ENCODE measurements at regions of chr10 and their contacts with region 1.

Region 1: GRCh38 chr10:122565728-122566206 is 5.2 kb downstream of the DMBT1 start:
- DNase-seq: peak; percentile 68 to 82 (median 76)
- ATAC-seq: peak; percentile 53 to 74 (median 56)
- H3K4me3 ChIP-seq: peak overlapping the region in 7 of 12 donors; percentile 11 to 26 (median 19)
- H3K27ac ChIP-seq: no peak overlapping the region
- H3K4me1 ChIP-seq: peaks cover 0 to 10% (median under 1%) of the 10 kb centered on the region in 12 donors
- H3K27me3 ChIP-seq: peaks cover 0 to 11% (median 0%) of the 10 kb centered on the region in 9 donors
- CTCF ChIP-seq: peak; percentile 74 to 91 (median 84)
- POLR2A ChIP-seq: no peak

Region 2: DNA sequence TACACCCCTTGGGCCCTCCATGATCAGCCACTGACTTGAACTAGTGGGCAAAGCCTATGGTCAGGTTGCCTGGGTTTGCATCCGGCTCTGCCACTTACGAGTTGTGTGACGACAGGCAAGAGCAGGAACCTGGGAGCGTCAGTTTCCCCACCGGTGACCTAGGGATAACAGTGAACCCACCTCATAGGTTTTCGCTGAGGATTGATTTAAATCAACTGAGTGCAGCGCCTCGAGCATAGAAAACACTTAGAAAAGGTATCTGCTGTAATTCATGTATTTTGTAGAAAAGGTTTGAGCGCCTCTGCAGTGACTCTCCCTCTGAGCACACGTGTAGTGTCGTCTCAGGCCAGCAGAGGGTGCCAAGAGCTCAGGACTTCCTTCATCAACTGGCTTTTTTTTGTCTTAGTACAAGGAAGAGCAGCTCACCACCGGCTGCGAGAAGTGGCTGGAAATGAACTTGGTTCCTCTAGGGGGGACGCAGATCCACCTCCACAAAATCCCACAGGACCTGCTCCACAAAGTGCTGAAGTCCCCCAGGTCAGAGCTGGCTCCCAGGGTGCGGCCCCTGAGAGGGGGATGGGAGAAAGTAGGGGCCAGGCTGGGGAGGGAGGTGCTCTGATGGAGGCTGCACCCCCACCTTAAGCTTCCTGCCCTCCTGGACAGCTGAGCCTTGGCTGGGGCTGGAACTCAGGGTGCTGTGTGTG is 267.0 kb before region 1 on chr10:
- intact Hi-C with region 1: loop called (anchors 1 to 5 kb)
- DNase-seq: peak; percentile 64 to 73 (median 66)
- ATAC-seq: peak in 3 of 4 donors; percentile 82 to 90 (median 88)
- H3K4me3 ChIP-seq: peak overlapping the region in 7 of 12 donors; percentile 15 to 37 (median 24)
- H3K27ac ChIP-seq: no peak overlapping the region
- H3K4me1 ChIP-seq: peaks cover 0 to 13% (median 0%) of the 10 kb centered on the region in 12 donors
- H3K27me3 ChIP-seq: no peaks in the 10 kb centered on the region
- CTCF ChIP-seq: peak; percentile 78 to 97 (median 92)
- POLR2A ChIP-seq: no peak

Region 3: GRCh38 chr10:122435212-122435827 is 130.4 kb before region 1 on chr10:
- intact Hi-C with region 1: loop called in 7 of 10 experiments (anchors 2 to 10 kb)
- DNase-seq: no peak
- ATAC-seq: peak in 3 of 4 donors; percentile 41 to 59 (median 46)
- H3K4me3 ChIP-seq: no peak overlapping the region
- H3K27ac ChIP-seq: no peak overlapping the region
- H3K4me1 ChIP-seq: no peaks in the 10 kb centered on the region
- H3K27me3 ChIP-seq: no peaks in the 10 kb centered on the region
- CTCF ChIP-seq: peak; percentile 60 to 85 (median 74)
- POLR2A ChIP-seq: no peak

Region 4: DNA sequence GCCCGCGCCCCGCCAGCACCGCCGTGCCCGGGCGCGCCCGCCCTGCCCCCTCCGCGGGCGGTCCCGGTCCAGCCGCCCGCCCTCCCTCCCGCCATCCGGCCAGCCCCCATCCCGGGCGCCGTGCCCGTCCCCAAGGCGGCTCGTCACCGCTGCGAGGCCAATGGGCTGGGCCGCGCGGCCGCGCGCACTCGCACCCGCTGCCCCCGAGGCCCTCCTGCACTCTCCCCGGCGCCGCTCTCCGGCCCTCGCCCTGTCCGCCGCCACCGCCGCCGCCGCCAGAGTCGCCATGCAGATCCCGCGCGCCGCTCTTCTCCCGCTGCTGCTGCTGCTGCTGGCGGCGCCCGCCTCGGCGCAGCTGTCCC is 104.4 kb before region 1 on chr10 and contains the start of gene HTRA1:
- intact Hi-C with region 1: loop called in 2 of 10 experiments (anchors 10 kb)
- DNase-seq: peak; percentile 83 to 90 (median 90)
- ATAC-seq: peak; percentile 72 to 87 (median 80)
- H3K4me3 ChIP-seq: peak within 1 kb of the TSS; percentile 66 to 97 (median 83)
- H3K27ac ChIP-seq: peak within 1 kb of the TSS; percentile 33 to 86 (median 77)
- H3K4me1 ChIP-seq: peaks cover 0 to 45% (median 24%) of the 10 kb centered on the region in 12 donors
- H3K27me3 ChIP-seq: peaks cover 0 to 37% (median 0%) of the 10 kb centered on the region in 9 donors
- CTCF ChIP-seq: no peak
- POLR2A ChIP-seq: no peak
- total RNA-seq, gene HTRA1: 35.7 to 153 (median 57.6) TPM

Region 5: DNA sequence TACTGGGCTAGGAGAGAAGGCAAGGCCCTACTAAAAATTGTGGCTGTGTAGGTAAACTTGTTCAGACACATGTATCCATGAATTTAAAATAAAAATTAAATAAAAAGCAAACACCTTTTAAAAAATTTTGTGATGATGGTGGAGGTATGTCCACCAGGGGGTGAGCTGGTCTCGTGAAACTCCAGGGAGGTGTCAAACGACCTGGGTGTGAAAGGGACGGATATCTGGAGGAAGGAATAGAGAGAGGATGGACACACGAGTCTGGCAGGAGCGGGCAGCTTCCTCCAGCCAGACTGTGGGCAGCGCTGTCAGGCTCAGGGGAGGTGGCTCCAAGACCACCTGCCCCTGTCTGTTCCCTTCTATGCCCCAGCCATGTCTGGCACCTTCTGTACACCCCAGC is 40.0 kb before region 1 on chr10:
- intact Hi-C with region 1: loop called in 3 of 10 experiments (anchors 2 to 5 kb)
- DNase-seq: no peak
- ATAC-seq: no peak
- H3K4me3 ChIP-seq: no peak overlapping the region
- H3K27ac ChIP-seq: no peak overlapping the region
- H3K4me1 ChIP-seq: peaks cover 0 to 16% (median 4%) of the 10 kb centered on the region in 12 donors
- H3K27me3 ChIP-seq: no peaks in the 10 kb centered on the region
- CTCF ChIP-seq: peak in 5 of 12 donors; percentile 12 to 43 (median 35)
- POLR2A ChIP-seq: no peak